Ovary (tissue), 10 donors: ENCODE measurements at regions of chr6 and their contacts with region 1.

Region 1: DNA sequence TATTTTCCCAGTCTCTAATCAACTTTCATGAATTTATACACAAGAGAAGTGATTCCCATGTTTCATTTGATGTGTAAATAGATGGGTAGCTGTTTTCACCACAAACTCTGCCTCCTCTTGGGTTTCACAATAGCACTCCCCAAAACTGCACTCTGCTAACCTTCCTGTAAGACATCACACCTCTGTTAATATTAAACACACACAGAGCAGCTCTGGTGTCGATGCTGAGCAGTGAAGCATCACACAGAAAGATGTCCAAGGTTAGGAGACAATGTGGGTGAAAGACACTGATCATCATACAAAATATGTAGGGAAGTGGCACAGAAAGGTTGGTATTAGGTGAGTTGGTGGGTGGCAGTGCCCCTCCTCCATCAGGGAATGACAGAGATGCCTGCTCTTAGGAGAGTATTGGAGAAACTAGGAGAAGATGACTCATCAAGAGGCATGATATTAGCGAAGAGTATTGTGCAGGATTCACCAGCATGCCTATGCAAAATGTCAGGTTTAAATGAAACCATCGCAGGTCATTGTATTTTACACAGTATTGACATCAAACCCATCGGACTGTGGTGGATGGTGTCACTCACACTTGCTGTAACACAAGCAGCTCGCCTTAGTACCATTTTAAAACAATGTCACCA is 199.8 kb downstream of the TBXT start:
- DNase-seq: no peak
- H3K4me3 ChIP-seq: no peak overlapping the region
- H3K27ac ChIP-seq: no peak overlapping the region
- H3K4me1 ChIP-seq: no peaks in the 10 kb centered on the region
- H3K27me3 ChIP-seq: no peaks in the 10 kb centered on the region
- CTCF ChIP-seq: no peak
- EP300 ChIP-seq: no peak
- POLR2A ChIP-seq: no peak

Region 2: GRCh38 chr6:165876588-165876987 is 91.3 kb before region 1 on chr6:
- intact Hi-C with region 1: no loop called
- DNase-seq: peak; percentile 73 to 87 (median 80)
- H3K4me3 ChIP-seq: no peak overlapping the region
- H3K27ac ChIP-seq: peak overlapping the region in 1 of 2 donors; percentile 22
- H3K4me1 ChIP-seq: peaks cover 5% of the 10 kb centered on the region
- H3K27me3 ChIP-seq: no peaks in the 10 kb centered on the region
- CTCF ChIP-seq: no peak
- EP300 ChIP-seq: no peak
- POLR2A ChIP-seq: no peak

Region 3: GRCh38 chr6:167056370-167056769 is 1088.5 kb after region 1 on chr6:
- intact Hi-C with region 1: loop called in 1 of 4 experiments (anchors 5 kb)
- DNase-seq: no peak
- H3K4me3 ChIP-seq: no peak overlapping the region
- H3K27ac ChIP-seq: no peak overlapping the region
- H3K4me1 ChIP-seq: peaks cover 2% of the 10 kb centered on the region
- H3K27me3 ChIP-seq: no peaks in the 10 kb centered on the region
- CTCF ChIP-seq: no peak
- EP300 ChIP-seq: no peak
- POLR2A ChIP-seq: no peak